ENCODE measurements at regions of chr18 and their contacts with region 1.

Region 1: GRCh38 chr18:7566567-7567473 is at the start of gene PTPRM:
- DNase-seq: peak; percentile 75
- H3K4me3 ChIP-seq: peak within 1 kb of the TSS; percentile 78 to 96 (median 79)
- H3K27ac ChIP-seq: peak within 1 kb of the TSS; percentile 54
- H3K4me1 ChIP-seq: peaks cover 3% of the 10 kb centered on the region
- H3K27me3 ChIP-seq: no peaks in the 10 kb centered on the region
- CTCF ChIP-seq: peak; percentile 30 to 31
- total RNA-seq, gene PTPRM: 34.1 to 65.8 TPM

Region 2: DNA sequence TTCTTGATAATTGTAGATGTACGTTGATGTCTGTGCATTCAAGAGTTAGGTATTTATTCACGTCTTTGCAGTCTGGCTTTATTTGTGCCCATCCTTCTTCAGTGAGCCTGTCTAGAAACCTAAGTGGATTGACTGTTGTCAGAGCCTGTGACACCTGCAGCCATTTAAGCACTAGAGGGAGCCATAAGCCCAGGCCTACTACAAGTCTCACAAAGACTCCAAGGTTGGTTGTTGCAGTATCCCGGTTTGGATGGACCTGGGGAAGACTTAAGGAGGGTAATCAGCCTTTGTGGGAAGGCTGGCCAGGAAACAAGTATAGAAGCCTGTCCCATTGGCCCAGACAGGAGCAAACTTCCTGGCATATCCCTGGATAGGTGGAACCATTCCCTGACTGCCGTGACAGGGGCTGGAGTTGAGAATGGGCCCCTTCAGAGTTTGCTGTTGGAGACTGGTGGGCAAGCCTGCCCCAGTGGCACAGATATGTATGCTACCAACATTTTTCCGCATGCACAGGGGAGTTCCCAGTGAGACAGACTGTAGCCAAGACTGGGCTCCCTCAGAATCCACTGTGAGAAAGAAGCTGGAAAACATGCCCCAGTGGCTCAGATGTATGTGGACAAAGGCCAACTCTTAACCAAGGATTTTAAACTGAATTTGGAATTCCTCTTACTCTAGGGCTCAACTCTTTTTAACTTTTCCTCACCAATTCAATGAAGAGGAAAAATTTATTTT is 345.2 kb before region 1 on chr18:
- CTCF ChIA-PET with region 1: no interaction called
- dilution Hi-C with region 1: no loop called
- in situ Hi-C with region 1: no loop called
- intact Hi-C with region 1: loop called (anchors 1 kb)
- DNase-seq: peak; percentile 58
- H3K4me3 ChIP-seq: no peak overlapping the region
- H3K27ac ChIP-seq: no peak overlapping the region
- H3K4me1 ChIP-seq: no peaks in the 10 kb centered on the region
- H3K27me3 ChIP-seq: no peaks in the 10 kb centered on the region
- CTCF ChIP-seq: peak; percentile 94 to 96

Region 3: GRCh38 chr18:7369006-7369405 is 197.8 kb before region 1 on chr18:
- CTCF ChIA-PET with region 1: no interaction called
- dilution Hi-C with region 1: no loop called
- in situ Hi-C with region 1: no loop called
- intact Hi-C with region 1: loop called (anchors 5 kb)
- DNase-seq: no peak
- H3K4me3 ChIP-seq: no peak overlapping the region
- H3K27ac ChIP-seq: no peak overlapping the region
- H3K4me1 ChIP-seq: peaks cover 3% of the 10 kb centered on the region
- H3K27me3 ChIP-seq: no peaks in the 10 kb centered on the region
- CTCF ChIP-seq: no peak

Region 4: GRCh38 chr18:7735194-7735593 is 168.4 kb after region 1 on chr18:
- CTCF ChIA-PET with region 1: no interaction called
- dilution Hi-C with region 1: no loop called
- in situ Hi-C with region 1: no loop called
- intact Hi-C with region 1: loop called (anchors 5 kb)
- DNase-seq: no peak
- H3K4me3 ChIP-seq: no peak overlapping the region
- H3K27ac ChIP-seq: no peak overlapping the region
- H3K4me1 ChIP-seq: peaks cover 17% of the 10 kb centered on the region
- H3K27me3 ChIP-seq: no peaks in the 10 kb centered on the region
- CTCF ChIP-seq: peak in 1 of 2 donors; percentile 49

Region 5: GRCh38 chr18:7812431-7813063 is 245.7 kb after region 1 on chr18:
- CTCF ChIA-PET with region 1: interaction called, 25 read pairs
- dilution Hi-C with region 1: no loop called
- in situ Hi-C with region 1: no loop called
- intact Hi-C with region 1: no loop called
- DNase-seq: peak; percentile 47
- H3K4me3 ChIP-seq: no peak overlapping the region
- H3K27ac ChIP-seq: no peak overlapping the region
- H3K4me1 ChIP-seq: peaks cover 15% of the 10 kb centered on the region
- H3K27me3 ChIP-seq: no peaks in the 10 kb centered on the region
- CTCF ChIP-seq: no peak

Region 6: DNA sequence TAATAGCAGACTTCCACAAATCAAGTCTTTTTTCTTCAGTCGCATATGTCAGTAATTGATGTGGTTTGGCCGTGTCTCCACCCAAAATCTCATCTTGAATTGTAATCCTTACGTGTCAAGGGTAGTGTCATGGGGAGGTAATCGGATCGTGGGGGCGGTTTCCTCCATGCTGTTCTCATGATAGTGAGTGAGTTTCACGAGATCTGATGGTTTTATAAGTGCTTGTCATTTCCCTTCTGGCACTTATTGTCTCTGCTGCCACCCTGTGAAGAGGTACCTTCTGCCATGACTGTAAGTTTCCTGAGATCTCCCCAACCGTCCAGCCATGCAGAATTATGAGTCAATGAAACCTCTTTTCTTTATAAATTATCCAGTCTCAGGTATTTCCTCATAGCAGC is 479.1 kb after region 1 on chr18:
- CTCF ChIA-PET with region 1: no interaction called
- dilution Hi-C with region 1: no loop called
- in situ Hi-C with region 1: no loop called
- intact Hi-C with region 1: loop called (anchors 10 kb)
- DNase-seq: no peak
- H3K4me3 ChIP-seq: no peak overlapping the region
- H3K27ac ChIP-seq: no peak overlapping the region
- H3K4me1 ChIP-seq: no peaks in the 10 kb centered on the region
- H3K27me3 ChIP-seq: no peaks in the 10 kb centered on the region
- CTCF ChIP-seq: no peak

Region 7: DNA sequence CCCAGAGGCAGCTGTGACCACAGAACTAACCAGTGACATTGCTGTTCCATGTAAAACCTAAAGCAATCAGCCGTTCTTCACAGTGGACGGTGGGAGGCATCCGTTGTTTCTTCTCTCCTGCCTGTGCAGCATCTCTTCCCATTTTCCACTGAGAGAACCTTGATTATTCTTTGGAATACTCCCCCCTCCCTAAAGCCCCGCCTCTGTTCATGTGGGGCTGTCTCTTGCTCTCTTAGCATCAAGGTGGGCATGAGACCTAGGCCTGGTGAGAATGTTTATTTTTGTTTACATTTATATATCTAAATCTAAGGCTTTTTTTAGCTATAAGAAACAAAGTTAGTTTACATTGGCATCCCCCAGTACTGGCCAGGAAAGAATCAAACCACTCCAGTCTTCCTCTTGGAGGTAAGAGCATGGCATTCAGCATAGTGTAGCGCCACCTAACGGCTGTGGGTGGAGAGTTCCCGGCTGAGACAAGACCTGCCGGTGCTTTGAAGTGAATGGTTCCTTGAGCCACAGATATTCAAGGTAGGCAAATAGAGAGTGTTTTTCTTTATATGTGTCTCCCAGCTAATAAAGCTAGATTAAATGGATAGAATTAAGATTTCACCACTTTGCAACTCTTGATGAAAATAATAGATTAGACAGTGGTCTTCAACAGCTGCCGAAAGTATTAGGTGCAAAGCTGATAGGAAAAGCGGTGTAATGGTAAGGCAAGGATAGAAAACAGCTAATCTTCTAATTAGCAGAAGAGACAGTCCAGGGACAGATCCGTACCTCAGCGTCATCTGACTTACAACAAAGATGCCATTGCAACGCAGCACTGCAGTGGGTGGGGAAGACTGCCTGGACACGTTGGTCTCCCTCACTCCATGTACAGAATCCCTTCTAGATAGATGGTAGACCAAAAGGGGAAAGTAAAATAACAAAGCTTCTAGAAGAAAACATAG is 822.8 kb after region 1 on chr18:
- CTCF ChIA-PET with region 1: no interaction called
- dilution Hi-C with region 1: no loop called
- in situ Hi-C with region 1: loop called in 1 of 2 experiments (anchors 25 kb)
- intact Hi-C with region 1: loop called (anchors 1 kb)
- DNase-seq: peak; percentile 53
- H3K4me3 ChIP-seq: no peak overlapping the region
- H3K27ac ChIP-seq: no peak overlapping the region
- H3K4me1 ChIP-seq: no peaks in the 10 kb centered on the region
- H3K27me3 ChIP-seq: no peaks in the 10 kb centered on the region
- CTCF ChIP-seq: peak; percentile 92 to 96